Stomach (tissue), 19 donors: ENCODE measurements at regions of chr3 and their contacts with region 1.

Region 1: DNA sequence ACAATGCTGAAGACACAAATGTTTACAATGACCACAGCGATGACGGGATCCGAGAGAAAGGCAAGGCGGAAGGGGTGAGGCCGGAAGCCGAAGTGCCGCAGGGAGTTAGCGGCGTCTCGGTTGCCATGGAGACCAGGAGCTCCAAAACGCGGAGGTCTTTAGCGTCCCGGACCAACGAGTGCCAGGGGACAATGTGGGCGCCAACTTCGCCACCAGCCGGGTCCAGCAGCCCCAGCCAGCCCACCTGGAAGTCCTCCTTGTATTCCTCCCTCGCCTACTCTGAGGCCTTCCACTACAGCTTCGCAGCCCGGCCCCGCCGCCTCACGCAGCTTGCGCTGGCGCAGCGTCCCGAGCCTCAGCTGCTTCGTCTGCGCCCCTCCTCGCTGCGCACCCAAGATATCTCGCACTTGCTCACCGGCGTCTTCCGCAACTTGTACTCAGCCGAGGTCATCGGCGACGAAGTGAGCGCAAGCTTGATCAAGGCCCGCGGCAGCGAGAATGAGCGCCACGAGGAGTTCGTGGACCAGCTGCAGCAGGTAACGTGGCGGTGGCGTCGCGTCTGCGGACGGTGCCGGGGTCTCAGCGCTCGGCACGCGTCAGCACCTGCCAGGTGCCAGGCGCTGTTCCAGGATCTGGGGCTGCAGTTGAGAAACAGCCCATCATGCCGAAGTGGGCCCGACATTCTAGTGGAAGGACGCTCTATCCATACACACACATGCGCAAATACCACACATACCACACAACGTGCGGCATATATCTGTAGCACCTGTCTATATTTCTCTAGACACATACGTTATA is at the start of gene DLEC1:
- DNase-seq: peak; percentile 77 to 92
- H3K4me3 ChIP-seq: peak within 1 kb of the TSS; percentile 44 to 62 (median 54)
- H3K27ac ChIP-seq: peak within 1 kb of the TSS in 4 of 5 donors; percentile 20 to 44 (median 34)
- H3K4me1 ChIP-seq: peaks cover 6 to 18% (median 16%) of the 10 kb centered on the region in 4 donors
- H3K27me3 ChIP-seq: no peaks in the 10 kb centered on the region
- CTCF ChIP-seq: no peak
- EP300 ChIP-seq: no peak
- POLR2A ChIP-seq: no peak
- total RNA-seq, gene DLEC1: 1.3 to 1.5 TPM in 2 of 5 donors, not detected in the others

Region 2: DNA sequence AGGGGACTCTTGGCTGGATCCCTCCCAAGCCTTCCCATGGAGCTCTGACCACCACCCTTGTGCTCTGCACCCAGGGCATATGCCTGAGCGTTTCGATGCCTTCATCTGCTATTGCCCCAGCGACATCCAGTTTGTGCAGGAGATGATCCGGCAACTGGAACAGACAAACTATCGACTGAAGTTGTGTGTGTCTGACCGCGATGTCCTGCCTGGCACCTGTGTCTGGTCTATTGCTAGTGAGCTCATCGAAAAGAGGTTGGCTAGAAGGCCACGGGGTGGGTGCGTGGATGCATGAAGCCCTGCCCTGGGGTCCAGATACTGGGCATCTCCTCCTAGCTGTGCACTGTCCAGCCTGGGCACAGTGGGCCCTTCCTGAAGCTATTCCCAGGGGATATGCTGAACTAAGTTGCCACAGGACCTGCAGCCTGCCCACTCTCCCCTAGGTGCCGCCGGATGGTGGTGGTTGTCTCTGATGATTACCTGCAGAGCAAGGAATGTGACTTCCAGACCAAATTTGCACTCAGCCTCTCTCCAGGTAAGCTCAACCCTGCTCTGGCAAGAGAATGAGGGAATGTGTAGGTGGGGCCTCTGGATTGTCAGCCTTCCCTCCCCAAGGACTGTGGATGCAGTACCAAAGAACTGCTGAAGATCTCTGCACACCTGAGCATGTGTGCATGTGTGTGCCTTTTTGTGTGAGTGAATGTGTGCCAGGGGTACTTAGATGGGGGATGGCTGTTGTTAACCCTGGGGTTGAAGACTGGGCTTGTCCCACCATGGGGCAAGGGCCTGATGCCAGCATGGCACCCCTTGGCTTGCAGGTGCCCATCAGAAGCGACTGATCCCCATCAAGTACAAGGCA is 101.2 kb after region 1 on chr3:
- intact Hi-C with region 1: loop called (anchors 10 kb)
- DNase-seq: peak in 1 of 2 donors; percentile 21
- H3K4me3 ChIP-seq: peak overlapping the region in 2 of 4 donors; percentile 77 to 99
- H3K27ac ChIP-seq: no peak overlapping the region
- H3K4me1 ChIP-seq: peaks cover 23 to 41% (median 33%) of the 10 kb centered on the region in 4 donors
- H3K27me3 ChIP-seq: no peaks in the 10 kb centered on the region
- CTCF ChIP-seq: no peak
- EP300 ChIP-seq: no peak
- POLR2A ChIP-seq: no peak